Ascending aorta (tissue), 2 donors: ENCODE measurements at regions of chr18 and their contacts with region 1.

Region 1: GRCh38 chr18:59379772-59380522 is 20.9 kb upstream of the LMAN1 start:
- DNase-seq: no peak
- H3K4me3 ChIP-seq: no peak overlapping the region
- H3K27ac ChIP-seq: no peak overlapping the region
- H3K4me1 ChIP-seq: no peaks in the 10 kb centered on the region
- H3K27me3 ChIP-seq: no peaks in the 10 kb centered on the region
- CTCF ChIP-seq: no peak

Region 2: DNA sequence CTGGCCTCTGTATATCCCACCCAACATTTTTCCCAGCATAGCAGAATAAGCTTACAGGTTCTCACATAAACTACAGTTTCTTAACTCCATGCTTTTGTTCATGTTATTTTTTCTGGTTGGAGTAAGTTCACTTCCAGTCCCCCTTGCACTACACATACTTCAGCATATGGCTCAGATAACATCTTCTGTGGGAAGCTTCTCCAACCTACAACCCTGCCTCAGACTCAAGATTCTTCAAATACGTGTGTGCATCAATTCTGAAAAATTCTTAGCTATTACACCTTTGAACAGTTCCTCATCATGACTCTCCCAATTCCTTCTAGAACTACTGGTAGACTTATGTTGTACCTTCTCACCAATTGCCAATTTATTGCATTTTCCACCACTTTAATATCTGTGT is 54.0 kb before region 1 on chr18:
- intact Hi-C with region 1: loop called (anchors 5 kb)
- DNase-seq: no peak
- H3K4me3 ChIP-seq: no peak overlapping the region
- H3K27ac ChIP-seq: no peak overlapping the region
- H3K4me1 ChIP-seq: no peaks in the 10 kb centered on the region
- H3K27me3 ChIP-seq: no peaks in the 10 kb centered on the region
- CTCF ChIP-seq: no peak

Region 3: DNA sequence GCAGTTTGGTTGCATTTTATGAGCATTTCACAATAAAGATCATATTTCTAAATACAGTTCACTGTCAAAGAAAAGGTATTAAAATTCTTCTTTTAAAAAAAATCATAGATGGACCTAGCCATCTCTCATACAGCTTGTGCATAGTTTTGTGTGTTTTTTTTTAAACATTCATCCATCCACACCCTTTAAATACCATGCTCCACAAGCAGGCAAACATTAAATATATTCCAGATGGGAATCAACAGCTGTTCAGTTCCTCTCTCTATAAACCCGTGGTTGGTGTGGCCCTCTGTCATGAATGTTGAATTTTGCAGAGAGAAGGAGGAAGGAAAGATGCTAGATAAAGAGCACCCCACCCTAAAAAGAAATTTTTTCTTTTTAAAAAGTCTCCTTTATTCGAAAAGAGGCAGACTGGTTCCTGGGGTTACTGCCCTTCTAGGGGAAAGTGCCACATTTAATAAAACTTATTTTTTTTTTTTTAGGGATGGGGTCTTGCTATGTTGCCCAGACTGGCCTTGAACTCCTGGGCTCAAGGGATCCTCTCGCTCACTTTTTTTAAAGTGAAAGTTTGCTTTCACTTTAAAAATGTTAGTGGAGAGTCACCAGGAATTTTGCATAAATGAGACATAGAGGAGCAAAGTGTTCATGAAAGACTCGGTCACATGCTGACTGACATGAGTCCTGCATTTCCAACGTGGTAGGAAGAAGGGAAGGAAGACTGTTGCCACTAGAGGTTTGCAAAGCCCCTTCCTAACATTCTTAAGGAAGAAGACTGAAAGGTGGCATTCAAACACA is 53.1 kb after region 1 on chr18:
- intact Hi-C with region 1: no loop called
- DNase-seq: no peak
- H3K4me3 ChIP-seq: no peak overlapping the region
- H3K27ac ChIP-seq: no peak overlapping the region
- H3K4me1 ChIP-seq: no peaks in the 10 kb centered on the region
- H3K27me3 ChIP-seq: no peaks in the 10 kb centered on the region
- CTCF ChIP-seq: no peak

Region 4: DNA sequence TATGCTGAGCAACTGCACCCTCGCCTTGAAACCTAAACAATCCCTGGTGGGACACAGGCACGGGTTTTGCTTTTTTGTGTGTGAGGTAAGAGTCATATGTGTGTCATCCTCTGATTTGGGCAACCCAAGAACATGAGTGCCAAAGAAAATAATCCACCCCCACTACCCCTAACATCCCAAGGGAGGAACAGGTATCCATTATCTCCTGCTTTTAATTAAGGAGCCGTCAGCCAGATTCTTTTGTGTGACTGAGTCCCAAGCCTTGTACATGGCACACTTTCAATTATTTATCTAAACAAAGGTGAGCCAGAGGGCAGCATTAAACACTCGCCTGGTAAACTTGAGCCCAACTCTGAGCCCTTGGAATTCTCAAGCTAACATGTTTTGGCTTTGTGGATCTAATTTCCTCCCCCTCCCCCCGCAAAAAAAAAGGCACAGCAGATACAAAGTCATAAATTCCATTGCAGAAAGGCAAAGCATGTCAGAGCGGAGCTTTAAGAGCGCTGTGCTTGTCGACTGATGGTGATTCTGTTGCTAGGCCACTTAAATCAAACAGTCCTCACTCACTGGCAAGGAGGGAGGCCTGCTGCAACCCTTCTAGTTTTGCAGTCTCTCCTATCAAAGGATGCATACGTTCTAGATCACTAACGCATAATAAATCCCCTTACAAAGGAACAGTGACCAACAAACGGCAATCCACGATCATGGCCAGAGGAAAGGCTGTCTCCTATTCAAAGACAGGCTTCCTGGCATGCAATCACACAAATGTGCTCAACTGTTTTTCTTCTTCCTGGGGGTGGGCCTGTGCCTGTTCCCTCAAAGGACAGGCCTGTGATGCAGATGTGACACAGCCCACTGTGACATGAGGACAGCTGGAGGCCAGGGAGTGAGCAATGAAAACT is 122.6 kb after region 1 on chr18:
- intact Hi-C with region 1: no loop called
- DNase-seq: no peak
- H3K4me3 ChIP-seq: no peak overlapping the region
- H3K27ac ChIP-seq: no peak overlapping the region
- H3K4me1 ChIP-seq: peaks cover 0 to 2% of the 10 kb centered on the region in 2 donors
- H3K27me3 ChIP-seq: no peaks in the 10 kb centered on the region
- CTCF ChIP-seq: no peak

Region 5: GRCh38 chr18:59528861-59529260 is 148.9 kb after region 1 on chr18:
- intact Hi-C with region 1: no loop called
- DNase-seq: no peak
- H3K4me3 ChIP-seq: no peak overlapping the region
- H3K27ac ChIP-seq: no peak overlapping the region
- H3K4me1 ChIP-seq: no peaks in the 10 kb centered on the region
- H3K27me3 ChIP-seq: no peaks in the 10 kb centered on the region
- CTCF ChIP-seq: no peak